Activated B cell treated with CpG ODN at 0.5 μM for 24 hours (primary cell): ENCODE measurements at regions of chr11 and their contacts with region 1.

Region 1: GRCh38 chr11:848380-848931 is 5.8 kb downstream of the TSPAN4 start:
- DNase-seq: peak; percentile 68
- ATAC-seq: peak; percentile 80
- H3K4me3 Mint-ChIP-seq: peak overlapping the region; percentile 35
- H3K27ac Mint-ChIP-seq: no peak overlapping the region
- H3K4me1 Mint-ChIP-seq: peaks cover 23% of the 10 kb centered on the region
- H3K27me3 Mint-ChIP-seq: peaks cover 7% of the 10 kb centered on the region
- CTCF ChIP-seq: peak; percentile 83

Region 2: GRCh38 chr11:279966-280582 is 568.4 kb before region 1 on chr11:
- CTCF ChIA-PET with region 1: no interaction called
- POLR2A ChIA-PET with region 1: no interaction called
- intact Hi-C with region 1: no loop called
- DNase-seq: peak; percentile 43
- ATAC-seq: peak; percentile 71
- H3K4me3 Mint-ChIP-seq: peak overlapping the region; percentile 74
- H3K27ac Mint-ChIP-seq: no peak overlapping the region
- H3K4me1 Mint-ChIP-seq: peaks cover 32% of the 10 kb centered on the region
- H3K27me3 Mint-ChIP-seq: peaks cover 19% of the 10 kb centered on the region
- CTCF ChIP-seq: no peak

Region 3: GRCh38 chr11:859509-860131 is 11.2 kb after region 1 on chr11:
- CTCF ChIA-PET with region 1: no interaction called
- POLR2A ChIA-PET with region 1: no interaction called
- intact Hi-C with region 1: no loop called
- DNase-seq: no peak
- ATAC-seq: no peak
- H3K4me3 Mint-ChIP-seq: no peak overlapping the region
- H3K27ac Mint-ChIP-seq: no peak overlapping the region
- H3K4me1 Mint-ChIP-seq: no peaks in the 10 kb centered on the region
- H3K27me3 Mint-ChIP-seq: no peaks in the 10 kb centered on the region
- CTCF ChIP-seq: no peak

Region 4: GRCh38 chr11:876519-876918 is 28.1 kb after region 1 on chr11:
- CTCF ChIA-PET with region 1: no interaction called
- POLR2A ChIA-PET with region 1: no interaction called
- intact Hi-C with region 1: no loop called
- DNase-seq: no peak
- ATAC-seq: no peak
- H3K4me3 Mint-ChIP-seq: no peak overlapping the region
- H3K27ac Mint-ChIP-seq: no peak overlapping the region
- H3K4me1 Mint-ChIP-seq: no peaks in the 10 kb centered on the region
- H3K27me3 Mint-ChIP-seq: no peaks in the 10 kb centered on the region
- CTCF ChIP-seq: no peak

Region 5: GRCh38 chr11:925496-926321 is 77.3 kb after region 1 on chr11 and contains the start of gene AP2A2:
- CTCF ChIA-PET with region 1: no interaction called
- POLR2A ChIA-PET with region 1: interaction called, 3 read pairs
- intact Hi-C with region 1: loop called (anchors 1 kb)
- DNase-seq: peak; percentile 96
- ATAC-seq: peak; percentile 90
- H3K4me3 Mint-ChIP-seq: peak within 1 kb of the TSS; percentile 81
- H3K27ac Mint-ChIP-seq: peak within 1 kb of the TSS; percentile 56
- H3K4me1 Mint-ChIP-seq: peaks cover 25% of the 10 kb centered on the region
- H3K27me3 Mint-ChIP-seq: no peaks in the 10 kb centered on the region
- CTCF ChIP-seq: peak; percentile 51
- total RNA-seq, gene AP2A2: 49.6 and 54.3 TPM in 2 replicates

Region 6: GRCh38 chr11:965206-965775 is 116.8 kb after region 1 on chr11:
- CTCF ChIA-PET with region 1: no interaction called
- POLR2A ChIA-PET with region 1: no interaction called
- intact Hi-C with region 1: loop called (anchors 5 kb)
- DNase-seq: no peak
- ATAC-seq: peak; percentile 21
- H3K4me3 Mint-ChIP-seq: no peak overlapping the region
- H3K27ac Mint-ChIP-seq: no peak overlapping the region
- H3K4me1 Mint-ChIP-seq: peaks cover 9% of the 10 kb centered on the region
- H3K27me3 Mint-ChIP-seq: no peaks in the 10 kb centered on the region
- CTCF ChIP-seq: no peak

Region 7: GRCh38 chr11:1050581-1051355 is 202.3 kb after region 1 on chr11:
- CTCF ChIA-PET with region 1: interaction called, 11 read pairs
- POLR2A ChIA-PET with region 1: no interaction called
- intact Hi-C with region 1: no loop called
- DNase-seq: peak; percentile 63
- ATAC-seq: peak; percentile 100
- H3K4me3 Mint-ChIP-seq: no peak overlapping the region
- H3K27ac Mint-ChIP-seq: no peak overlapping the region
- H3K4me1 Mint-ChIP-seq: no peaks in the 10 kb centered on the region
- H3K27me3 Mint-ChIP-seq: peaks cover 12% of the 10 kb centered on the region
- CTCF ChIP-seq: no peak

Region 8: DNA sequence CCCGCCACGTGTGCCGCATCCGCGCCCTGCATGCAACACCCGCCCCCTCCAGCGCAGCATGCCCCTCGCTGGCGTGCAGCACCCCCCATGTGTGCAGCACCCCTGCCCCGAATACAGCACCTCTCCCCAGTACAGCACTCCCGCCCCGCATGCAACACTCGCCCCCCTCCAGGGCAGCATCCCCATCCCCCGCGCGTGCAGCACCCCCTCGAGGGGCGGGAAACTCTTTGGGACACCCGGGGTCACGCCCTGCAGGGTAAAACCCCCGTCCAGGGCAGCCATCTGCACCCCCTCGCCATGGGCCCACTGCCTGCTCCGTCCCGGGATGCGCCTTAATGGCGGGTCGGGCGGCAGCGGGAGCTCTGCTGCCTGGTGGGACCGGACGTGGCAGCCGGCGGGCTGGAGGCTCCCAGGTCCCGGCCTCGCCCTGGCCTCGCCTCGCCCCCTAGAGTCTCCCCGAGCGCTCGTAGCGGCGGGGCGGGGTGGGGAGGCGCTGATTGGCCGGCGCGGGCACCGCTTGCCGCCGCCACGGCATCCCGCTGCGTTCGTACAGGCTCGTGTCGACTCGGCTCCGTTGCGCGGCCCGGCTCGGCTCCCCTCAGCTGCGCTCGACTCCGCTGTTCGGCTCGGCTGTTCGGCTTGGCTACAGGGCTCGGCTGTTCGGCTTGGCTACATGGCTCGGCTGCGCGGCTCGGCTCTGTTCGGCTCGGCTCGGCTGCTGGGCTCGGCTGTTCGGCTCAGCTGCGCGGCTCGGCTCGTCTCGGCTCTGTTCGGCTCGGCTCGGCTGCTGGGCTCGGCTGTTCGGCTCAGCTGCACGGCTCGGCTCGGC is 540.9 kb after region 1 on chr11:
- CTCF ChIA-PET with region 1: no interaction called
- POLR2A ChIA-PET with region 1: no interaction called
- intact Hi-C with region 1: loop called (anchors 5 kb)
- DNase-seq: peak; percentile 94
- ATAC-seq: peak; percentile 95
- H3K4me3 Mint-ChIP-seq: peak overlapping the region; percentile 74
- H3K27ac Mint-ChIP-seq: no peak overlapping the region
- H3K4me1 Mint-ChIP-seq: peaks cover 33% of the 10 kb centered on the region
- H3K27me3 Mint-ChIP-seq: peaks cover 26% of the 10 kb centered on the region
- CTCF ChIP-seq: no peak